ENCODE measurements at regions of chr6 and their contacts with region 1.

Region 1: DNA sequence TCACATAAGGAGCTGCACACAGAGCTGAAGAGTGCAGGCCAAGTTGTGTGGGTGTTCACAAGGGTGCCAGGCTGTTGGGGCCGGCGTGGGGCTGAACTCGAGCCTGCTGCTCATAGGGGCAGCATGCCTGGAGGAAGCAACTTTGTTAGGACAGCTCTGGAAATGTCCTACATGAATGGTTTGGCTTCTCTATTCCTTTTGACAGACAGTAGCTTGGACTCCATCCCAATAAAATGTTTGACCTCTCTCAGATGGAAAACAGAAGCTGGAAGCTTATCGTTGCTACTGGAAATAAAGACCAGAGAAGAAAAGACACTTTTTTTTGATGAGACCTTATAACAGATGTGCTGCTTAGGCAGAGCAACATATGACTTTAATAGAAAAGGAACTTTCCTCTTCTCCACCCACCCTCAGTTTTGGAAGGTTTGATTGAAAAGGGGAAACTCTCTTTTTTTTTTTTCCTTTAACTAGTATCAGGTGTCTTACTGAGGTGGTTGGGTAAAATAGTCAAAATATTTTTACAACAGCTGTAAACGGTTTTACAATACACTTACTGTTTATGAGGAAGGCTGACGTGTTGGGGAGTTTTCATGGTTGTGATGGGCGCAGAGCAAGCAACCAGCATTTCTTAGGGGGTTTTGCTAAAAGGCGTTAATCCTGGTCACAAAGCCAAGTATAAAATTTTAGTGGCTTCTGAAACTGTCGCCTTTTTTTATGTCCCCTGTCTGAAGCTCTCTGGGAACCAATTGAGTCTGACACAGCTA is 80.7 kb upstream of the EEF1E1 start:
- DNase-seq: no peak
- H3K4me3 Mint-ChIP-seq: no peak overlapping the region
- H3K27ac Mint-ChIP-seq: no peak overlapping the region
- H3K4me1 Mint-ChIP-seq: no peaks in the 10 kb centered on the region
- H3K27me3 Mint-ChIP-seq: no peaks in the 10 kb centered on the region

Region 2: DNA sequence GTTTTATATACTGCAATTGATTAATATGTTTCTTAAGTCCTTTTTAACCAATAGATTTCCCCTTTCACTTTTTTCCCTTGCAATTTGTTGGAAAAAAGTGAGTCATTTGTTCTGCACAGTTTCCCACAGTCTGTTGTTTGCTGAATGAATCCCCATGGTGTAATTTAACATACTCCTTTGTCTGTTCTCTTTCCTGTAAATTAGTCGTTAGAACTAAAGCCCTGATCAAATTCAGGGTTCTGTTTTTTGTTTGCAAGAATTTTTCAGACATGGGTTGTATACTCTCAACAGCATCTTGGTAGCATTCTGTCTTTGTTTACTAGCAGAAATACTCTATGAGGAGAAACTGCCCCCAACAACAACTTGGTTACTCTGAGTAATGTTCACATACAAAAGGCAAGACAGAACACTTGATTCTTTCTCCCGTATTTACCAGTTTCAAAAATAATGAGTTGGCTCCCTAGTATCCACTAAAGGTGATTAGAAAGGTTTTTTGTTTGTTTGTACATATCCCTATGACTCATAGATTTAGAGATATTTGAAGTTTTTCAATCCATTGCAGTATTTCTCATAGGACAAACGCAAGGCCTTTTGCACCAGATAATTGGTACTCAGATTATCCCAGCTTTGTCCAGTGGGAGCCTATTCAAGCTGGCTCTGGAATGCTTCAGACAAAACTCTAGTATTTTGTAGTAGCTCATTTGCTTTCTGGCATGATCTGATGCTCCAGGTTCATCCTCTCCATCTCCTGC is 135.4 kb before region 1 on chr6:
- intact Hi-C with region 1: no loop called
- DNase-seq: no peak
- H3K4me3 Mint-ChIP-seq: no peak overlapping the region
- H3K27ac Mint-ChIP-seq: no peak overlapping the region
- H3K4me1 Mint-ChIP-seq: peaks cover 6% of the 10 kb centered on the region
- H3K27me3 Mint-ChIP-seq: no peaks in the 10 kb centered on the region

Region 3: GRCh38 chr6:8200255-8200654 is 17.2 kb after region 1 on chr6:
- intact Hi-C with region 1: loop called (anchors 1 kb)
- DNase-seq: no peak
- H3K4me3 Mint-ChIP-seq: no peak overlapping the region
- H3K27ac Mint-ChIP-seq: no peak overlapping the region
- H3K4me1 Mint-ChIP-seq: no peaks in the 10 kb centered on the region
- H3K27me3 Mint-ChIP-seq: no peaks in the 10 kb centered on the region